ENCODE measurements at regions of chr13 and their contacts with region 1.

Region 1: DNA sequence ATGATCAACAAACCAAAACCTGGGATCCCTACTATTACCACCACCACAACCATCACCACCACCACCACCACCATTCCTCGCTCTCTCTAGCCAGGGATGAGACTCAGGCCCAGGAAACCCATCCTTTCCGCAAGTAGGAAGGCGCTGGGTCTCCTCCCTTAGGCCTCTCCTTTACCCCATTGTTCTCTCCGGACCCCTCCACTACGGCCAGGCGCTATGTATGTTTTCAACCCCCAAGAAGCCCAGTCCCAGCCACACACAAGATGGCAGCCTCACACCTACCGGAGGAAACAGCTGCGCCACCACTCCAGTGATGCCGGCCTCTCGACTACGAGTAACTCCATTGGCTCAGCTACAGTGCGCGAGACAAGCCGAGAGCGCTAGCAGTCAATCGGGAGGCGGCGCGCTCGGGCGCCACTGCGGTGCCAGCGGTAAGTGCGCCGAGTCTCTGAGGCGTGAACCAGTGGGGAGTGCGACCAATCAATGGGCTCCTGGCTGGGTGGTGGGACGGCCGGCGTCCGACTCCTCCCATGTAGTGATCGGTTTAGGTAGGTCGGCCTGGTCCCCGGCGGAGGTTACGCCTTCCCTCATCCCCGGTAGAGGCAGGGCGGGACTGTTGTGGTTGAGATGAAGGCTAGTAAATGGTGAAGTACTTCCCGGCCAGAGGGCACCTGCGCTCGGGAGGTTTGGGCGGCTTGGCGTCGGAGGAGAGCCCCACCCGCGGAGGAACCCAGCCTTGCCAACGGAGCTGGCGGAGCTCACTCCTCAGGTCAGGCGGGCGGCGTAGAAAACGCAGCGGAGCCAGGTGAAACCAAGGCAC is at the starts of genes CAB39L and SETDB2:
- ATAC-seq: peak; percentile 89 to 97 (median 94)
- H3K4me3 ChIP-seq: peak within 1 kb of the TSS; percentile 55 to 80 (median 69)
- H3K27ac ChIP-seq: peak within 1 kb of the TSS; percentile 90 to 95
- H3K4me1 ChIP-seq: peaks cover 3 to 6% of the 10 kb centered on the region in 2 donors
- total RNA-seq, gene CAB39L: 5.1 to 21.3 (median 10.3) TPM
- total RNA-seq, gene SETDB2: 4.2 to 9.5 (median 7.6) TPM

Region 2: DNA sequence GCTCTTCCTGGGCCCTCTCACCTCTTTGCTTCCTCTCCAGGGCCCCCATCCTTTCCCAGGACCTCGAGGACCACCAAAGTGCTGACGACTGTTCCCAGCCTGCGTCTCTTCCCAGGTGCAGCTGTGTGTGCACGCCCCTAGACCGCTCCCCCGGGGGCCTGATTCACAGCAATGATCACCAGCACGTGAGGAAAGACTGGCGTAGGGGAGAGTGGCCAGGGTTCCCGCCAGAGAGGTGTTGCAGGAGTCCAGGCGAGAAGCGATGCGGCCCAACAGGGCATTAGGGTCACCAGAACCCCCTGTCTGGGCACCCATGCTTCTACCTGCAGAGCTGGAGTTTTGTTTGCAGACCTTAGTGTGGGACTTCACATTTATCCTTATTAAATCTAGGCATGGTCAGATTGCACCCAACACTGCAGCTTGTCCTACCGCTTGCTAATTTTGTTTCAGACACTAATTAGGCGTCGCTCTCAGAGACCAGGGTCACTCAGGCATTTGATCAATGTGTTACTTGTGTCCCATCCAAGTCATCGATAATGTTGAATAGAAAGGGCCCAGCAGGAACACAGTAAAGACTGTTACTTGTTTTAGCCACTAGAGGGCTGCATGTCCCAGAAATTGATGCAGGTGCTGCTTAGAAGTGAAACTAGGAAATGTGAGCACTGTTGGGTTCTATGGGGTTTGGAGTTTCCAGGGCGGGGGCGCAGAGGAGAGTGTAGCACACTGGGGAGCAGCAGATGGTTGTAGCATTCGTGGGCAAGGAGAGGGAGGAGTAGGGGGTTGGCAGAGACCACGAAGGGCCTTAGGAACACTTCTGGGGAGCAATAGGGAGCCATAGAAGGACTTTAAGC is 142.9 kb before region 1 on chr13:
- in situ Hi-C with region 1: loop called in 1 of 9 experiments (anchors 25 kb)
- ATAC-seq: peak; percentile 83 to 94 (median 86)
- H3K4me3 ChIP-seq: no peak overlapping the region
- H3K27ac ChIP-seq: no peak overlapping the region
- H3K4me1 ChIP-seq: peaks cover 0 to 11% of the 10 kb centered on the region in 2 donors